ENCODE measurements at regions of chr2 and their contacts with region 1.

Region 1: DNA sequence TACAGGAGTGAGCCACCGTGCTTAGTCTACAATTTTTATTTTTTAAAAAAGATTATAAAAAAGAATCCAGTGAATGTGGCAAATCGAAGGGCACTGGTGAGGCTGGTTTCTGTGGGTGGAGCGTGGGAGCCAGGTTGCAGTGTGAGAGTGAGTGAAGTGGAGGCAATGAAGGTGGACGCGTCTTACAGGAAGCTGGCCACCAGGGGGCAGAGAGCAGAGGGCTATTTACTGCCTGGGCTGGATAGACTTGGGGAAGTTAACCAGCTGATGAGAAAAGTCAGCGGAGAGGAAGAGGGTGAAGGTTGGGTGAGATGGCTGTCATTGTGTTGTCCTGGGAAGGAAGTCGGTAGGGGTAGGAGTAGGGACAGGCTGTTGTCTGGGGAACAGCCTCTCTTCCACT is 6.8 kb downstream of the SCTR start:
- DNase-seq: peak; percentile 75 to 79 (median 76)
- ATAC-seq: peak; percentile 99
- H3K4me3 ChIP-seq: no peak overlapping the region
- H3K27ac ChIP-seq: no peak overlapping the region
- H3K4me1 ChIP-seq: no peaks in the 10 kb centered on the region
- H3K27me3 ChIP-seq: peaks cover 0 to 21% of the 10 kb centered on the region in 2 experiments; a peak in 3 of 5 replicates
- CTCF ChIP-seq: peak; percentile 81 to 82 (median 82)
- EP300 ChIP-seq: no peak
- POLR2A ChIP-seq: no peak
- RAD21 ChIP-seq: peak; percentile 78 to 86

Region 2: DNA sequence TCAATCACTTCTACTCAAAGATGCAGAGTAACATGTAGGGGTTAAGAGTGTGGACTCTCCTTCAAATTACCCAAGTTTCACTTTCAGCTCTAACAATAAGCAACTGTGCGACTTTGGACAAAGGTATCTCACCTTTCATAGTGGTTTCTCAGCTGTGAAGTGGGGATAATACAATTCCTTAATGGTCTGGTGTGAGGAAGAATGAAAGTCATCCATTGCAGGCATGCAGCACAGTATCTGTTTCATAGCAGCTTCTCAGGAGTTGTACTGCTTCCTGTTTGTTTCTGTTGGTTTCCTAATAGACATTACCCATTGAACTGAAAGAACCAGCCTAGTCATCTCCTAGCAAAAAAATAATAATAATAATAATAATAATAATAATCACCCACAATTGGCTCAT is 1628.5 kb before region 1 on chr2:
- CTCF ChIA-PET with region 1: no interaction called
- POLR2A ChIA-PET with region 1: no interaction called
- in situ Hi-C with region 1: no loop called
- intact Hi-C with region 1: no loop called
- DNase-seq: no peak
- ATAC-seq: no peak
- H3K4me3 ChIP-seq: no peak overlapping the region
- H3K27ac ChIP-seq: no peak overlapping the region
- H3K4me1 ChIP-seq: no peaks in the 10 kb centered on the region
- H3K27me3 ChIP-seq: peaks cover 0 to 5% of the 10 kb centered on the region in 2 experiments; a peak in 1 of 5 replicates
- CTCF ChIP-seq: no peak
- EP300 ChIP-seq: no peak
- POLR2A ChIP-seq: no peak
- RAD21 ChIP-seq: no peak

Region 3: GRCh38 chr2:119234377-119235019 is 282.9 kb before region 1 on chr2:
- CTCF ChIA-PET with region 1: no interaction called
- POLR2A ChIA-PET with region 1: no interaction called
- in situ Hi-C with region 1: no loop called
- intact Hi-C with region 1: no loop called
- DNase-seq: peak; percentile 34 to 45 (median 38)
- ATAC-seq: peak; percentile 93
- H3K4me3 ChIP-seq: no peak overlapping the region
- H3K27ac ChIP-seq: no peak overlapping the region
- H3K4me1 ChIP-seq: peaks cover 0 to 6% of the 10 kb centered on the region in 2 experiments; a peak in 2 of 5 replicates
- H3K27me3 ChIP-seq: no peaks in the 10 kb centered on the region
- CTCF ChIP-seq: peak; percentile 52 to 61 (median 61)
- EP300 ChIP-seq: no peak
- POLR2A ChIP-seq: no peak
- RAD21 ChIP-seq: peak; percentile 26 to 56; a peak in 2 of 4 replicates

Region 4: DNA sequence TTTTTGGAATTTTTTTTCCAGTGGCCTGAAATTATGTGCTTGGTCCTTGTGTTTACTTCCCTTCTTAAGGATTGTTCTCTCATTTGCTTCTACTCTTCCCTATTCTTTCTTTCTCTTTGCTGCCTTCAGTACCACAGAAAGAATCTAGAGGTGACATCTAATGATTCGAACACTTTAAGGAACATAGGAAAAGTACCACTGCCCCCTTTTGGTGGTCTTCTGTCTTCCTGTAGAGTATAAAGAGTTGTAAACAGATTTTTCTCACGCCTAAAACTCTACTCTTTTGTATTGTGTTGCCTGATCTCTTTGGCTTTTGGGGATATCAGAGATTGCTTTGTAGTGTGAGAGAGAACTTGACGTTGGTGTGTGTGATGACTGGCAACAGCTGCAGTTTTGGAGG is 13.9 kb after region 1 on chr2:
- CTCF ChIA-PET with region 1: no interaction called
- POLR2A ChIA-PET with region 1: no interaction called
- in situ Hi-C with region 1: no loop called
- intact Hi-C with region 1: no loop called
- DNase-seq: peak in 1 of 4 experiments; percentile 12
- ATAC-seq: no peak
- H3K4me3 ChIP-seq: no peak overlapping the region
- H3K27ac ChIP-seq: no peak overlapping the region
- H3K4me1 ChIP-seq: no peaks in the 10 kb centered on the region
- H3K27me3 ChIP-seq: peaks cover 5 to 9% of the 10 kb centered on the region in 2 experiments; a peak in 3 of 5 replicates
- CTCF ChIP-seq: peak in 1 of 3 experiments; percentile 25; a peak in 2 of 6 replicates
- EP300 ChIP-seq: no peak
- POLR2A ChIP-seq: no peak
- RAD21 ChIP-seq: peak in 1 of 2 experiments; percentile 30; a peak in 1 of 4 replicates

Region 5: DNA sequence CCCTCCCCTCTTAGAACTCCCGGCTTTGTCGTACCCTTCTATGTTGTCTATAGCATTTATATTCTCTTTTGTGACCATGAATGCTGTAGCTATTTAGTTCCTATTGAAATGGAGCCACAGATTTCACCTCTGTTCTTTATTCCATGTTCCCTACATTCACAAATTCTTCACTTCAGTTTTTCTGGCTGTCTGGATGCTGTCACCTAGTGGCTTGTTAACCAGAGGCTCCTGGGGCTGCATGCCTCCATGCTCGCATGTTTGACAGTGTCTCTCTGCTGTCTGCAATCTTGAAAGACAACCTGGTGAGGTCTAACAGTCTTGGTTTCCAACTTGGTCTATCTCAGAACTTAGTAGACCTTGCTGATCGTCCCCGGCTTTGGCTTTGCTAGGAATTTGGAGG is 75.0 kb after region 1 on chr2:
- CTCF ChIA-PET with region 1: interaction called, 3 read pairs
- POLR2A ChIA-PET with region 1: no interaction called
- in situ Hi-C with region 1: no loop called
- intact Hi-C with region 1: loop called (anchors 1 kb)
- DNase-seq: peak in 1 of 4 experiments; percentile 25
- ATAC-seq: no peak
- H3K4me3 ChIP-seq: no peak overlapping the region
- H3K27ac ChIP-seq: no peak overlapping the region
- H3K4me1 ChIP-seq: peaks cover 6 to 9% of the 10 kb centered on the region in 2 experiments; a peak in 3 of 5 replicates
- H3K27me3 ChIP-seq: peaks cover 0 to 23% of the 10 kb centered on the region in 2 experiments; a peak in 2 of 5 replicates
- CTCF ChIP-seq: peak; percentile 20 to 46 (median 21); a peak in 2 of 6 replicates
- EP300 ChIP-seq: no peak
- POLR2A ChIP-seq: no peak
- RAD21 ChIP-seq: peak in 1 of 2 experiments; percentile 51; a peak in 2 of 4 replicates

Region 6: DNA sequence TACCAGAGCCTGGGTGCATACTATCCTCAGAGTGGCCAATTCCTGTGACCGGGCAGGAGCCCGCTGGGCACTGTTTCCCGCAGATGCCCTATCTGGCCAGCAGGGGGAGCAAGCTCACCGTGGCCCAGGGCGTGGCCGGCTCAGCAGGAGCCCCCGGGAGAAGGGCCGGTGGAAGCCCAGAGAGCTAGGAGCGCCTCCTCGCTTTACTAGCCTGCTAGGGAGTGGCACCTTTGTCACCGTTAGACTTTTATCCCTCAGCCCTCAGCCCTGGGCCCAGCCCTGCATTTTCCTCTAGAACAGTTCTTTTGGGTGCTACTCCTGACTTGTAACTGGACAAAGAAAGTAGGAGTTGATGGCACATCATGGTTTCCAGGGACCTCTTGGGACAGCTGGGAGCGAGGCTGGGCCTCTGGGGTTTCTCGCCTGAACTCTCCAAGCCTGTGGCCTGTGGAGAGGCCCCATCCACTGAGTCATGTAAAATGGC is 185.5 kb after region 1 on chr2:
- CTCF ChIA-PET with region 1: no interaction called
- POLR2A ChIA-PET with region 1: no interaction called
- in situ Hi-C with region 1: no loop called
- intact Hi-C with region 1: no loop called
- DNase-seq: peak; percentile 78 to 84 (median 81)
- ATAC-seq: peak; percentile 97
- H3K4me3 ChIP-seq: no peak overlapping the region
- H3K27ac ChIP-seq: no peak overlapping the region
- H3K4me1 ChIP-seq: peaks cover 0 to 4% of the 10 kb centered on the region in 2 experiments; a peak in 3 of 5 replicates
- H3K27me3 ChIP-seq: peaks cover 0 to 4% of the 10 kb centered on the region in 2 experiments; a peak in 2 of 5 replicates
- CTCF ChIP-seq: peak; percentile 89 to 97 (median 92)
- EP300 ChIP-seq: no peak
- POLR2A ChIP-seq: no peak
- RAD21 ChIP-seq: peak; percentile 80 to 94

Measured in K562 (cell line).